ENCODE measurements at regions of chr7 and their contacts with region 1.

Region 1: DNA sequence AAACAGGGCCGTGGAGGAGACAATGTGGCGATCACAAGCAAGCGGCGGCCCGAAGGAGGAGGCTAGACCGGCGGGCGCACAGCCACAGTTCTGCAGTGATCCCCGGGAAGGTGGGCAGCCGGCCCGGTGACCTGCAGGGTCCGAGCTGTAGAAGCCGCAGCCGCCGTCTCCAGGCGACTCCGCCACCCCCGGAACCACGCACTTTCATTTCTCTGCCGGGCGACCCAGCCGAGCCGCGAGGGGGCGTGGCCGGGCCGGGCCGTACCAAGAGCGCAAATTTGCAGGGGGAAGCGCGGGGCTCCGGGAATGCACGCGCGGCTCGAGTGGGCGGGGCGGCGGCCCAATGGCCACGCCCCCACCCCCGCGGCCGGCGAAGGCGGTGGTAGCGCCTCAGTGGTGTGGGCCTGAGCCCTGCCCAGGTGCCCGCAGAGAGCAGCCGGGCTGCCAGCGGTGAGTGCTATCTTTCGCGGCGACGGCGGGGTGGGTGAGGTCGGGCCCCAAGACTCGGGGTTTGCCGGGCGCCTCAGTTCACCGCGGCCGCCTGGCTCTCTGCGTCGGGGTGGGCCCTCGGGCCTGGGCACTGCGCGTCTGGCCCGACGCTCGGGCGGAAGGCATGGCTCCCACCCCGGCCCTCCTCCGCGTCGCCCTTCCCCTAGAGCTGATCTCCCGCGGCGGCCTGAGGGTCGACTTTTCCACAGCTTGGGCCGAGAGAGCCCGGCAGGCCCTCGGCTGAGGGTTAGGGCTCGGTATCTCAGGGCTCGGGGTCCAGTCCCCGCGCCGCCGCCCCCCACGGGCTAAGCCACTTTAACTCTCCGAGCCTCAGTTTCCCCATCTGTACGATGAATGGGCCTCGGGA is at the start of gene POR:
- DNase-seq: peak; percentile 100
- H3K4me3 ChIP-seq: peak within 1 kb of the TSS; percentile 74 to 93
- H3K27ac ChIP-seq: peak within 1 kb of the TSS; percentile 57 to 79
- H3K4me1 ChIP-seq: peaks cover 5 to 10% of the 10 kb centered on the region in 2 experiments; a peak in 2 of 4 replicates
- H3K27me3 ChIP-seq: no peaks in the 10 kb centered on the region
- CTCF ChIP-seq: no peak; the same call in 1 of the 2 replicates
- EP300 ChIP-seq: peak; percentile 38 to 86; a peak in 1 of 4 replicates
- RAD21 ChIP-seq: no peak
- polyA plus RNA-seq, gene POR: 55.8 and 68.7 TPM in 2 replicates

Region 2: DNA sequence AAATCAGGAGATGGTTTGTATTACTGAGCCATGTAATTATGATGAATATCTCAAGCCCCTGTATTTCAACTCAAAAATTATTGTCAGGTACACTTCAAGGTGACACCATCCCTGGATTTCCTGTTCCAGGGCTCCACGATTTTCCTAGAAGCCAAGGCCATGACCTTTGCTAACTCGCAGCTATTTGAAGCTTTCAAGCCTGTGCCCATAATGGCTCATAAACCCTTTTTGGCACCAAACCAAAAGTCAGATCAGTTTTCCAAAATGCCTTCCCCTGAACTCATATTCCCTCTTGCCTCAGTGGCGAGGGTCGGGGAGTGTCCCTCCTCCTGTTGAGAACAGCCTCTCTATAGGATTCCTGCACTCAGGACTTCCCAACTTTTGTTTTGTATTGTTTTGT is 247.0 kb before region 1 on chr7:
- CTCF ChIA-PET with region 1: no interaction called
- POLR2A ChIA-PET with region 1: no interaction called
- DNase-seq: no peak
- H3K4me3 ChIP-seq: no peak overlapping the region
- H3K27ac ChIP-seq: no peak overlapping the region
- H3K4me1 ChIP-seq: peaks cover 0 to 2% of the 10 kb centered on the region in 2 experiments; a peak in 1 of 4 replicates
- H3K27me3 ChIP-seq: no peaks in the 10 kb centered on the region
- CTCF ChIP-seq: no peak
- EP300 ChIP-seq: no peak
- RAD21 ChIP-seq: no peak

Region 3: GRCh38 chr7:75808106-75808505 is 106.9 kb before region 1 on chr7:
- CTCF ChIA-PET with region 1: no interaction called
- POLR2A ChIA-PET with region 1: no interaction called
- DNase-seq: no peak
- H3K4me3 ChIP-seq: no peak overlapping the region
- H3K27ac ChIP-seq: no peak overlapping the region
- H3K4me1 ChIP-seq: no peaks in the 10 kb centered on the region
- H3K27me3 ChIP-seq: no peaks in the 10 kb centered on the region; the same call in 1 of the 2 replicates
- CTCF ChIP-seq: no peak
- EP300 ChIP-seq: no peak
- RAD21 ChIP-seq: no peak

Region 4: GRCh38 chr7:75925717-75926435 is 10.9 kb after region 1 on chr7:
- CTCF ChIA-PET with region 1: interaction called, 5 read pairs
- POLR2A ChIA-PET with region 1: interaction called, 21 read pairs
- DNase-seq: no peak
- H3K4me3 ChIP-seq: no peak overlapping the region
- H3K27ac ChIP-seq: no peak overlapping the region
- H3K4me1 ChIP-seq: no peaks in the 10 kb centered on the region
- H3K27me3 ChIP-seq: no peaks in the 10 kb centered on the region
- CTCF ChIP-seq: no peak
- EP300 ChIP-seq: no peak
- RAD21 ChIP-seq: no peak

Region 5: GRCh38 chr7:75966190-75966961 is 51.4 kb after region 1 on chr7:
- CTCF ChIA-PET with region 1: interaction called, 3 read pairs
- POLR2A ChIA-PET with region 1: interaction called, 10 read pairs
- DNase-seq: peak; percentile 53
- H3K4me3 ChIP-seq: no peak overlapping the region
- H3K27ac ChIP-seq: peak overlapping the region in 1 of 2 experiments; percentile 25; a peak in 2 of 4 replicates
- H3K4me1 ChIP-seq: peaks cover 0 to 50% of the 10 kb centered on the region in 2 experiments; a peak in 1 of 4 replicates
- H3K27me3 ChIP-seq: no peaks in the 10 kb centered on the region
- CTCF ChIP-seq: no peak
- EP300 ChIP-seq: peak in 1 of 2 experiments; percentile 13; a peak in 1 of 4 replicates
- RAD21 ChIP-seq: no peak

Region 6: GRCh38 chr7:75994388-75995051 is 79.6 kb after region 1 on chr7 and contains the start of gene TMEM120A:
- CTCF ChIA-PET with region 1: no interaction called
- POLR2A ChIA-PET with region 1: interaction called, 10 read pairs
- DNase-seq: peak; percentile 100
- H3K4me3 ChIP-seq: peak within 1 kb of the TSS; percentile 69 to 84
- H3K27ac ChIP-seq: peak within 1 kb of the TSS; percentile 40 to 84; a peak in 3 of 4 replicates
- H3K4me1 ChIP-seq: peaks cover 6 to 20% of the 10 kb centered on the region in 2 experiments; a peak in 2 of 4 replicates
- H3K27me3 ChIP-seq: no peaks in the 10 kb centered on the region
- CTCF ChIP-seq: no peak
- EP300 ChIP-seq: peak in 1 of 2 experiments; percentile 22; a peak in 2 of 4 replicates
- RAD21 ChIP-seq: 0 out of 2 replicates have a peak, but pooled peaks have one; percentile 1
- polyA plus RNA-seq, gene TMEM120A: 59.8 and 95.2 TPM in 2 replicates

Region 7: GRCh38 chr7:76047811-76048667 is 133.1 kb after region 1 on chr7 and contains the starts of genes MDH2 and STYXL1:
- CTCF ChIA-PET with region 1: no interaction called
- POLR2A ChIA-PET with region 1: interaction called, 10 read pairs
- DNase-seq: peak; percentile 99
- H3K4me3 ChIP-seq: peak within 1 kb of the TSS; percentile 73 to 97
- H3K27ac ChIP-seq: peak within 1 kb of the TSS; percentile 81 to 86
- H3K4me1 ChIP-seq: peaks cover 0 to 9% of the 10 kb centered on the region in 2 experiments; a peak in 2 of 4 replicates
- H3K27me3 ChIP-seq: no peaks in the 10 kb centered on the region
- CTCF ChIP-seq: no peak
- EP300 ChIP-seq: no peak
- RAD21 ChIP-seq: no peak
- polyA plus RNA-seq, gene MDH2: 244 and 301 TPM in 2 replicates
- polyA plus RNA-seq, gene STYXL1: 86.6 and 89.4 TPM in 2 replicates